ENCODE measurements at regions of chr10 and their contacts with region 1.

Region 1: DNA sequence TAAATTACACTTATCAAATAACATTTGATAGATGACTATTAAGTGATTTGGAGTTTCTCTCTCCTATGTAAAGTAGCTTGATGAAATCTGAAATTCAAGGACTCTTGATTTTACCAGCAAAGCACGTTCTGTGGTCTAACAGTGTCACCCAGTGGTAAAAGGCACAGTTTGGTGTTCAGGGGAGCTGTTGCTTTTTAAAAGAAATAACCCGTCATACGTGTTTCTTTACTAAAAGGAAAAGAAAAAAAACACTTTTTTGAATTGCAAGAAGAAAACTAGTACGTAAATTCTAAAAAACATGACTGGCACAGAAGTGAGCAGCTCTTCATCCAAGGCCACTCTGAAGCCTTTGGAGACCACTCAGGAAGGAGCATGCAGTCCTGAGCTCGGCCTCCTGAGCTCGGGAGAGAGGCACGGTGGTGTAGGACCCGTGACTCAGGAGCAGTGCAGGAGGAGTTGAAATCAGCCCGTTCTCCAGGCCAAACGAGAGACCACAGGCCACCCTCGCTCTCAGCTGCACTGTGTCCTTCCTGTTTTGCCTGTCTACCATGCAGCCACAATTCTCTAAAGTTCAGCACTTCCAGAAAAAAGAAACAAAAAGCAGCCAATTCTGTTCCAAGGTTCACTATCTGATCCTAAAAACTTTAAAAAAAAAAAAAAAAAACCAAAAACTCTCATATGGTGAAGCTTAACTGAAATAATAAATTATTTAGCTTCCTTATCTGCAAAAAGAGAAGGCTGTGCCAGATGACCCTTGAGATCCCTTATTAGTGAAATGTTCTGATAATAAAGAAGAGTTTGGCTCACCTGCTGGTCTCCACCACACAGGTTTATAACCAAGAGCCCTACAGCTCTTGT is 212.6 kb upstream of the FRMD4A start:
- DNase-seq: peak; percentile 66
- ATAC-seq: peak; percentile 80
- H3K4me3 Mint-ChIP-seq: peak overlapping the region; percentile 53
- H3K27ac Mint-ChIP-seq: peak overlapping the region; percentile 84
- H3K4me1 Mint-ChIP-seq: peaks cover 63% of the 10 kb centered on the region
- H3K27me3 Mint-ChIP-seq: no peaks in the 10 kb centered on the region

Region 2: GRCh38 chr10:14195433-14195832 is 347.8 kb before region 1 on chr10:
- CTCF ChIA-PET with region 1: interaction called, 11 read pairs
- DNase-seq: no peak
- ATAC-seq: no peak
- H3K4me3 Mint-ChIP-seq: no peak overlapping the region
- H3K27ac Mint-ChIP-seq: no peak overlapping the region
- H3K4me1 Mint-ChIP-seq: no peaks in the 10 kb centered on the region
- H3K27me3 Mint-ChIP-seq: peaks cover 45% of the 10 kb centered on the region

Region 3: DNA sequence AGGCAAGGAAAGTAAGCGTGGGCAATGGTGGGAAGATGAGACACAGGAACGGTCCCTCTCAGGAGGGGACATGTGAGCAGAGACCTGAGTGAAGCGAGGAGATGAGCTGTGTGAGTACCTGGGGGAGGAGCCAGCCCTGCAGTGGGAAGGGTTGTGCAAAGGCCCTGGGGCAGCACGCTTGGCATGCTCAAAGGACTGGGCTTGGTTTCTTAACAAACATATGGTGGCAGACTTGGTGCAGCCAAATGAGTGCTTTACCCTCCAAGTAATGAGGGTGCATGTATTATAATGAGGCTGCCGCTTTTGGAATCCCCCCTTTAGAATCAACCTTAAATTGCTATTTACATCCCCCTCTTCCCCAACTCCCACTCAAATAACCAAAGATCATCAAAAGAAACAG is 59.9 kb before region 1 on chr10:
- CTCF ChIA-PET with region 1: no interaction called
- DNase-seq: no peak
- ATAC-seq: no peak
- H3K4me3 Mint-ChIP-seq: no peak overlapping the region
- H3K27ac Mint-ChIP-seq: no peak overlapping the region
- H3K4me1 Mint-ChIP-seq: no peaks in the 10 kb centered on the region
- H3K27me3 Mint-ChIP-seq: peaks cover 50% of the 10 kb centered on the region

Region 4: GRCh38 chr10:14500172-14500765 is 43.0 kb before region 1 on chr10:
- CTCF ChIA-PET with region 1: interaction called, 16 read pairs
- DNase-seq: no peak
- ATAC-seq: no peak
- H3K4me3 Mint-ChIP-seq: no peak overlapping the region
- H3K27ac Mint-ChIP-seq: no peak overlapping the region
- H3K4me1 Mint-ChIP-seq: peaks cover 13% of the 10 kb centered on the region
- H3K27me3 Mint-ChIP-seq: peaks cover 12% of the 10 kb centered on the region

Region 5: GRCh38 chr10:14556285-14556956 is 13.1 kb after region 1 on chr10:
- CTCF ChIA-PET with region 1: interaction called, 11 read pairs
- DNase-seq: peak; percentile 64
- ATAC-seq: peak; percentile 62
- H3K4me3 Mint-ChIP-seq: no peak overlapping the region
- H3K27ac Mint-ChIP-seq: peak overlapping the region; percentile 74
- H3K4me1 Mint-ChIP-seq: peaks cover 95% of the 10 kb centered on the region
- H3K27me3 Mint-ChIP-seq: no peaks in the 10 kb centered on the region

Region 6: DNA sequence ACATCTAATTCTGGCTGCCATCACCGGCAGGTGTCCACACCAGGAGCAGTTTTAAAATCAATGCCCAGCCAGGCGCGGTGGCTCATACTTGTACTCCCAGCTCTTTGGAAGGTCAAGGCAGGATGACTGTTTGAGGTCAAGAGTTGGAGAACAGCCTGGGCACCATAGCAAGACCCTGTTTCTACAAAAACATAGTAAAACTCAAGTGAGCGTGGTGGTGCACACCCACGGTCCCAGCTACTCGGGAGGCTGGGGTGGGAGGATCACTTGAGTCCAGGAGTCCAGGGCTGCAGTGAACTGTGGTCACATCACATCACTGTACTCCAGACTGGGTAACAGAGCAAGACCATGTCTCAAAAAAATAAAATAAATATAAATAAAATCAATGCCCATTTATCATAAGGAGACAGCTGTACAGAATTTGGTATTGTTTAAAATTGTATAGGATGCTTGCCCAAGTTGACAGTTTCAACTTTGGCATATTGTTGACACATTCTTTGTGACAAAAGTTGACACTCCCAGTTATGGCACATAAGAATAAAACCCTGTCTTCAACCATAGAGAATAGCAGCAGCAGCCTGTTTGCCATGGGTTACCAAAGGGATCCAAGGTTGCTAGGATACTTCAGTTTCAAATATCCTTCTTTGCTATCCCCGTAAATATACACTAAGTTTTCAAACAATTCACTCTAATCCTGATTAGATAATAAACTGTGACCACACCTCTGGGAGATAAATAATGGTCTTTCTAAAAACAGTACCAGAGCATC is 38.5 kb after region 1 on chr10:
- CTCF ChIA-PET with region 1: no interaction called
- DNase-seq: no peak
- ATAC-seq: no peak
- H3K4me3 Mint-ChIP-seq: no peak overlapping the region
- H3K27ac Mint-ChIP-seq: peak overlapping the region; percentile 55
- H3K4me1 Mint-ChIP-seq: peaks cover 69% of the 10 kb centered on the region
- H3K27me3 Mint-ChIP-seq: no peaks in the 10 kb centered on the region

Region 7: DNA sequence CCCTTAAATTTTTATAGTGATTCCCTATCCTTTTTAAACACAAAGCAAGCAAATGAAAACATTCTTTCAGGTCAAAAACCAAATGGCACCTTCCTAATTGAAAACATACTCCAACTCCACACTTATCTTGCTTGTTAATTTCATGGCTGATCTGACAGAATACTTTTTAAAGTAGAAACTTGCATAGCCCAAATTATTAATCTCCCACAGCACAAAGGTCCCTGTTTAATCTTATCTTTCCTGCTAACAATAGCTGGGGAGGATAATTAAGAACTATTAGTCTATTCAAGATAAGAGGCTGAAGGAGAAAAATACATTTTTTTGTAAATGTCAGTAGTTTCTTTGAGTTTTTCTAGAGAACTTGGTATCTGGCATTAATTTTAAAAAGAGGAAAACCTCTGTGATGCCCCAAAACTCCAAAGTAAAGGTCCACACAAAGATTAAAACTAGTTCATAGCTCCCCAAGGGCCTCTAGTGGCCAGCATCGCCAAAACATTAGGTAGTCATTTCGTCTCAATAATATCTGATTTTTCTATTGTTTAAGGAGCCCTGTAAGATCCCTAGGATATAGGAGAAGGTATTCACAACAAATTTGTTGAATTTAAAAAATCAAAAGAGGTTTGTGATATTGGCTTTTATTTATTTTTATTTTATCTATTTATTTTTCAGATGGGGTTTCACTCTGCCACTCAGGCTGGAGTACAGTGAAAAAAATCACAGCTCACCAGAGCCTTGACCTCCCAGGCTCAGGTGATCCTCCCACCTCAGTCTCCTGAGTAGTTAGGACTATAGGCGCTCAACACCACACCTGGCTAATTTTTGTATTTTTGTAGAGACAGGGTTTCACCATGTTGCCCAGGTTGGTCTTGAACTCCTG is 279.8 kb after region 1 on chr10:
- CTCF ChIA-PET with region 1: interaction called, 22 read pairs
- DNase-seq: no peak
- ATAC-seq: peak; percentile 49
- H3K4me3 Mint-ChIP-seq: no peak overlapping the region
- H3K27ac Mint-ChIP-seq: no peak overlapping the region
- H3K4me1 Mint-ChIP-seq: peaks cover 4% of the 10 kb centered on the region
- H3K27me3 Mint-ChIP-seq: peaks cover 13% of the 10 kb centered on the region

Measured in activated CD8-positive, alpha-beta memory T cell treated with anti-CD3 and anti-CD28 coated beads, Interleukin-2, amount 10 ng/mL, durations not matched to agents 7 days and 5 days (primary cell).